ENCODE measurements at regions of chr9 and their contacts with region 1.

Region 1: GRCh38 chr9:20622330-20623020 is at the start of gene MLLT3:
- DNase-seq: peak; percentile 95 to 98 (median 97)
- ATAC-seq: peak; percentile 74
- H3K4me3 ChIP-seq: peak within 1 kb of the TSS; percentile 97 to 98
- H3K4me3 Mint-ChIP-seq: peak within 1 kb of the TSS; percentile 98
- H3K27ac ChIP-seq: peak within 1 kb of the TSS; percentile 75 to 88
- H3K27ac Mint-ChIP-seq: peak within 1 kb of the TSS; percentile 99
- H3K4me1 ChIP-seq: peaks cover 41% of the 10 kb centered on the region
- H3K4me1 Mint-ChIP-seq: peaks cover 46% of the 10 kb centered on the region
- H3K27me3 ChIP-seq: no peaks in the 10 kb centered on the region
- H3K27me3 Mint-ChIP-seq: no peaks in the 10 kb centered on the region
- CTCF ChIP-seq: no peak
- total RNA-seq, gene MLLT3: 40.3 to 44.5 TPM

Region 2: DNA sequence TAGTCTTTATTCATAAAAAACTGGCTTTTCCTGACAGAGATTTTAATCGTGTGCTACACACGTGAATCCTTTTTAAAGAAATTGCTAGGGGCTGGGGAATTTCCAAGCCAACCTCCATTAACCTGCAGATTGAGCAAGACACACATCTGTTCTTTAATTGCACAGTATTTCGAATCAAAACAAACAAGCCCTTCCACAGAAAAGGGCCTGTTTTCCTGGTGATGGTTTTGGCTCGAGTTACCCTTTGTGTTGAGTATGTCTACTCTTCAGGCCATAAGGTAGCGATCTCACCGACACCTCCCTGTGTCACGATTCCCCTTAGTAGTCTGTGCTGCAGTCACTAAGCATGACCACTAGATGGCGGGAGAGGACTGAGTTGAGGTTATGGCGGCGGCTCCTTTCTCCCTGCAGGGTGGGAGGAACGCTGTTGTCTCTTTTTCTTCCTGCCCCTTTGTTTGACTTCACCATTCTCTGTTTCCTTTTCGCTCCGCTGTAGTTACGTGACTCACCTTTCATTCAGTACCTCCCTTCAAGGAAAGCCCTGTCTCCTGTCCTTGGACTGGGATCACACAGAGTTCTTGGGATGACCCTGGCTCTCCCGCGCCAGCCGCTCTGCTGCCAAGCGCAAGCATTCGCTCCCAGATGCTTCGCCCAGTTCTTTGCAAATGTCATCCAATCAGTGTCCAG is 696.5 kb before region 1 on chr9:
- CTCF ChIA-PET with region 1: interaction called, 9 read pairs
- POLR2A ChIA-PET with region 1: no interaction called
- intact Hi-C with region 1: loop called (anchors 1 to 5 kb)
- DNase-seq: peak; percentile 61 to 87 (median 78)
- ATAC-seq: peak; percentile 100
- H3K4me3 ChIP-seq: peak overlapping the region in 1 of 2 experiments; percentile 26
- H3K4me3 Mint-ChIP-seq: peak overlapping the region; percentile 59
- H3K27ac ChIP-seq: no peak overlapping the region
- H3K27ac Mint-ChIP-seq: no peak overlapping the region
- H3K4me1 ChIP-seq: peaks cover 4% of the 10 kb centered on the region
- H3K4me1 Mint-ChIP-seq: peaks cover 8% of the 10 kb centered on the region
- H3K27me3 ChIP-seq: no peaks in the 10 kb centered on the region
- H3K27me3 Mint-ChIP-seq: peaks cover 9% of the 10 kb centered on the region
- CTCF ChIP-seq: peak; percentile 87

Region 3: GRCh38 chr9:20397348-20397747 is 225.1 kb before region 1 on chr9:
- CTCF ChIA-PET with region 1: no interaction called
- POLR2A ChIA-PET with region 1: no interaction called
- intact Hi-C with region 1: loop called in 1 of 2 experiments (anchors 5 kb)
- DNase-seq: no peak
- ATAC-seq: no peak
- H3K4me3 ChIP-seq: no peak overlapping the region
- H3K4me3 Mint-ChIP-seq: no peak overlapping the region
- H3K27ac ChIP-seq: no peak overlapping the region
- H3K27ac Mint-ChIP-seq: no peak overlapping the region
- H3K4me1 ChIP-seq: peaks cover 45% of the 10 kb centered on the region
- H3K4me1 Mint-ChIP-seq: peaks cover 65% of the 10 kb centered on the region
- H3K27me3 ChIP-seq: no peaks in the 10 kb centered on the region
- H3K27me3 Mint-ChIP-seq: no peaks in the 10 kb centered on the region
- CTCF ChIP-seq: no peak

Region 4: DNA sequence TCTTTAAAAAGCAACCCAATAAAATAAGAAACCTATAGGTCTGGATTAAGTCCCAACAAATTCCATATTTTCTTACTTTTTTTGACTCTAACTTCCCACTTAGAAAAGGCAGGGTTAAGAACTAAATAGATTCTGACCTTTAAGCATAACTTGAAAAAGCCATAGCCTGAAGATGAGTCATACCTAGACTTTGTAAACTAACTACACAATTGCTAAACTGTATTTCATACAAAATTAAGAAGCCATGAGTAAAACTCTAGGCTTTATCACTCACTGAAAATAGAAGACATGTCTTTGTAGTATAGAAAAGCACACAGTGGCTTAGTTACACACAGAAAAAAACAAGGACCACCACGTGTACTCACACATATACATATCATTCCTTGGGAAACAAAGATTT is 51.7 kb before region 1 on chr9:
- CTCF ChIA-PET with region 1: interaction called, 3 read pairs
- POLR2A ChIA-PET with region 1: no interaction called
- intact Hi-C with region 1: loop called in 1 of 2 experiments (anchors 5 kb)
- DNase-seq: no peak
- ATAC-seq: no peak
- H3K4me3 ChIP-seq: no peak overlapping the region
- H3K4me3 Mint-ChIP-seq: no peak overlapping the region
- H3K27ac ChIP-seq: no peak overlapping the region
- H3K27ac Mint-ChIP-seq: no peak overlapping the region
- H3K4me1 ChIP-seq: peaks cover 6% of the 10 kb centered on the region
- H3K4me1 Mint-ChIP-seq: peaks cover 71% of the 10 kb centered on the region
- H3K27me3 ChIP-seq: no peaks in the 10 kb centered on the region
- H3K27me3 Mint-ChIP-seq: no peaks in the 10 kb centered on the region
- CTCF ChIP-seq: no peak

Region 5: DNA sequence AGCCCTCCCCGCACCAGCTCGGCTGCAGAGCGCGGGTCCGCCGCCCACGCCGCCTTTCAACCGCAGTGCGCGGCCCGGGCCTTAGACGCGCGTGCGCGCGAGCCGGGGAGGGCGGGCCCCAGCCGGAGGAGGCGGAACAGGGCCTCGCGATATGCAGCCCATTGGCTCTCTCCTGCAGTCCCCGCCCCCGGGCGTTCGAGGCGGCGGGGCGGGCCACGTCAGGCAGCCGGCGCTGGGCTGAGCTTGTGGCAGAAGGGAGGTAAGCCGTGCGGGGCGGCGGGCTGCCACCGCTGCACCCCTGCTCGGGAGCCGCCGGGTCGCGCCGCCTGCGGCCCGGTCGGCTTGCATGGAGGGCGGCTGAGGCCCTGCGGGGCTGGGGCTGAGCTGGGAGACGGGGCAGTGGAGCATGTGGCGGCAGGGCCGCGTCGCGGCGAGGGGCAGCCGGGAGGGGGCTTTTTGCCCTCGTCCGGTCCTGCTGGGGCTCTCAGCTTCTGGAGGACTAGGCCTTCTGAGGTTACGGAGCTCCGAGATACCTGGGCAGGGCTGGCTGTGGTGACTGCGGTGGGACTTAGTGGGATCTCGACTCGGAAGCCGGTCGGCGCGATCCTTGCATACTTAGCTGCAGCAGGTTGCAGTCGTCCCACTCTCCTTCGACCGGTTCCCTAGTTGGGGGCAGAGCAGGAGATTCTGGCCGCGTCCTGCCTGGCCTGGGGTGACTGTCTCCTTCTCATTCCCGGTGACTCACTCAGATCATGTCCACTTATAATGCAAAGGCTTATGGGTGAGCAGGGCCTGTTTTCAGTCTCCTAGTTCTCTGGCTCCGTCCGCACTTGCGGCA is 61.8 kb after region 1 on chr9 and contains the start of gene FOCAD:
- CTCF ChIA-PET with region 1: interaction called, 7 read pairs
- POLR2A ChIA-PET with region 1: interaction called, 23 read pairs
- intact Hi-C with region 1: loop called (anchors 1 kb)
- DNase-seq: peak; percentile 88 to 97 (median 94)
- ATAC-seq: peak; percentile 98
- H3K4me3 ChIP-seq: peak within 1 kb of the TSS; percentile 63 to 74
- H3K4me3 Mint-ChIP-seq: peak within 1 kb of the TSS; percentile 87
- H3K27ac ChIP-seq: peak within 1 kb of the TSS; percentile 57 to 64
- H3K27ac Mint-ChIP-seq: peak within 1 kb of the TSS; percentile 84
- H3K4me1 ChIP-seq: peaks cover 8% of the 10 kb centered on the region
- H3K4me1 Mint-ChIP-seq: peaks cover 20% of the 10 kb centered on the region
- H3K27me3 ChIP-seq: no peaks in the 10 kb centered on the region
- H3K27me3 Mint-ChIP-seq: no peaks in the 10 kb centered on the region
- CTCF ChIP-seq: no peak
- total RNA-seq, gene FOCAD: 7.1 to 9.8 TPM

Region 6: GRCh38 chr9:20854444-20854843 is 232.0 kb after region 1 on chr9:
- CTCF ChIA-PET with region 1: no interaction called
- POLR2A ChIA-PET with region 1: no interaction called
- intact Hi-C with region 1: no loop called
- DNase-seq: no peak
- ATAC-seq: no peak
- H3K4me3 ChIP-seq: no peak overlapping the region
- H3K4me3 Mint-ChIP-seq: no peak overlapping the region
- H3K27ac ChIP-seq: no peak overlapping the region
- H3K27ac Mint-ChIP-seq: no peak overlapping the region
- H3K4me1 ChIP-seq: no peaks in the 10 kb centered on the region
- H3K4me1 Mint-ChIP-seq: no peaks in the 10 kb centered on the region
- H3K27me3 ChIP-seq: no peaks in the 10 kb centered on the region
- H3K27me3 Mint-ChIP-seq: no peaks in the 10 kb centered on the region
- CTCF ChIP-seq: no peak

Region 7: GRCh38 chr9:21110708-21111576 is 488.5 kb after region 1 on chr9:
- CTCF ChIA-PET with region 1: interaction called, 17 read pairs
- POLR2A ChIA-PET with region 1: no interaction called
- intact Hi-C with region 1: loop called (anchors 1 kb)
- DNase-seq: peak in 3 of 9 experiments; percentile 19 to 85 (median 78)
- ATAC-seq: peak; percentile 92
- H3K4me3 ChIP-seq: no peak overlapping the region
- H3K4me3 Mint-ChIP-seq: no peak overlapping the region
- H3K27ac ChIP-seq: no peak overlapping the region
- H3K27ac Mint-ChIP-seq: no peak overlapping the region
- H3K4me1 ChIP-seq: no peaks in the 10 kb centered on the region
- H3K4me1 Mint-ChIP-seq: no peaks in the 10 kb centered on the region
- H3K27me3 ChIP-seq: no peaks in the 10 kb centered on the region
- H3K27me3 Mint-ChIP-seq: peaks cover 2% of the 10 kb centered on the region
- CTCF ChIP-seq: peak; percentile 95

Region 8: GRCh38 chr9:21267485-21268346 is 645.2 kb after region 1 on chr9:
- CTCF ChIA-PET with region 1: no interaction called
- POLR2A ChIA-PET with region 1: no interaction called
- intact Hi-C with region 1: no loop called
- DNase-seq: no peak
- ATAC-seq: no peak
- H3K4me3 ChIP-seq: no peak overlapping the region
- H3K4me3 Mint-ChIP-seq: no peak overlapping the region
- H3K27ac ChIP-seq: no peak overlapping the region
- H3K27ac Mint-ChIP-seq: no peak overlapping the region
- H3K4me1 ChIP-seq: no peaks in the 10 kb centered on the region
- H3K4me1 Mint-ChIP-seq: peaks cover 5% of the 10 kb centered on the region
- H3K27me3 ChIP-seq: no peaks in the 10 kb centered on the region
- H3K27me3 Mint-ChIP-seq: peaks cover 26% of the 10 kb centered on the region
- CTCF ChIP-seq: no peak